IMR-90 (cell line): ENCODE measurements at regions of chr3 and their contacts with region 1.

Region 1: GRCh38 chr3:128095222-128095703 is 28.3 kb downstream of the RUVBL1 start:
- DNase-seq: peak; percentile 83
- ATAC-seq: peak; percentile 99
- H3K4me3 ChIP-seq: no peak overlapping the region
- H3K27ac ChIP-seq: no peak overlapping the region; the same call in 1 of the 2 replicates
- H3K4me1 ChIP-seq: peaks cover 5% of the 10 kb centered on the region
- H3K27me3 ChIP-seq: no peaks in the 10 kb centered on the region
- CTCF ChIP-seq: peak; percentile 92
- POLR2A ChIP-seq: no peak
- RAD21 ChIP-seq: peak; percentile 93

Region 2: DNA sequence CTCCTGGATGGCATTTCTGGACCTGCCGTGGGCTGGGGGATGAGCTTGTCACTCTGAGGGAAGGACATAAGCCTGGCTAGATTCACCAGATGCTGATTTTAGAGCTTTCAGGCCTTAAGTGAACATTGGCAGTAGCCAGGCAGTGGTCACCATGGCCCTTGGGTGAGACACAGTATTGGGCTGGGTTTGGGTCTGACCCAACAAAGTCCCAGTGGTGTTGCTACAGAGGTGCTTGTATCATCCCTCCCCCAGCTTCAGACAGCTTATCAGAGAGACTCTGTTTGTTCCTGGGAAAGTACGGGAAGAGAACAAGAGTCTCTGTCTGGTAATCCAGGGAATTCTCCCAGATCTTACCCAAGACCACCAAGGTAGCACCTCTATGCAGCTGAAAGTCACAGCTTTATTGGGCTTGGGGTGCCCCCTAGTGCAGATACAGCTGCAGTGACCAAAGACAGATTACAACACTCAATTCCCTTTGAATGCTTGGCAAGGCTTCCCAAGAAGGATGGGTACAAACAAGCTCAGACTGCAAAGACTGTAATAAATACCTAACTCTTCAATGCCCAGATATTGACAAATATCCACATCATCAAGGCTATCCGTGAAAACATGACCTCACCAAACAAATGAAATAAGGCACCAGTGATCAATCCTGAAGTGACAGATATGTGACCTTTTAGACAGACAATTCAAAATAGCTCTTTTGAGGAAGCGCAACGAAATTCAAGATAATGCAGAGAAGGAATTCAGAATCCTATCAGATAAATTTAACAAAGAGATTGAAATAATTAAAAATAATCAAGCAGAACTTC is 38.2 kb after region 1 on chr3:
- CTCF ChIA-PET with region 1: interaction called, 26 read pairs
- POLR2A ChIA-PET with region 1: no interaction called
- dilution Hi-C with region 1: no loop called
- in situ Hi-C with region 1: loop called (anchors 5 kb)
- intact Hi-C with region 1: loop called (anchors 1 kb)
- DNase-seq: peak; percentile 70
- ATAC-seq: peak; percentile 87
- H3K4me3 ChIP-seq: no peak overlapping the region
- H3K27ac ChIP-seq: no peak overlapping the region
- H3K4me1 ChIP-seq: no peaks in the 10 kb centered on the region
- H3K27me3 ChIP-seq: peaks cover 3% of the 10 kb centered on the region; the same call in 1 of the 2 replicates
- CTCF ChIP-seq: peak; percentile 81
- POLR2A ChIP-seq: no peak
- RAD21 ChIP-seq: peak; percentile 87

Region 3: DNA sequence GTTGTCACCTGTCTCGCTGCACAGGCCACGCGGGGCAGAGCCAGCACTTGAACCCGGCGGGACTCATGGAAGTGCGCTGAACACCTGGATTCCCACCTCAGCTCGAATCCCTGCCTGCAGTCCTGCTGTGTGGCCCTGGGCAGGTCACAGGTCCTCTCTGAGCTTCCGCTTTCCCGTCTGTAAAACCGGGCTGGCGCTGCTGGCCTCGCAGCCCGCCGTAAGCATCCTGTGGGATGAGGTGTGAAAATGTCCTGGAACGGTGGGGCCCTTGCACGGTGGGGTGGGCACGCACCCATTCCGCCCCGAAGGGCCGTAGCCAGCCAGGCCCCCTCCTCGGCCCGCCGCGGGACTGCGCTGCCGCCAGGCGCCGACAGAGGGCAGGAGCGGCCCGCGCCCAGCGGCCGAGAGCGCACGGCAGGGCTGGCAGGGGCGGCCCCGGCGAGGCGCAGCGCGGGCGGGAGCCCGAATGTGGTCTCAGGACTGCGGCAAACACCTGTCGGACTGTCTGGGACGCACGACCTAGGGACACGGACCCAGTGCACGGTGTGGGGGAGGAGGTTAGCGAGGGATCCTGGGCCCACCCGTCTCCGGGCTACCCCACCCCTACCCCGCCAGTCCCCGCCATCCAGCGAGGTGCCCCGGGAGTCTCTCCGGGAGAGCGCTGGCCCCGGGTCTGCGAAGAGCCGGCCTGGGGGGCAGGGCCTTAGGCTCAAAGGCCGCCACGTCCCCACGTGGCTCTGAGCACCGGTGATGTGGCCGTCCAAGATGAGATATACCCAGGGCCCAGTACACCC is 331.1 kb after region 1 on chr3:
- CTCF ChIA-PET with region 1: no interaction called
- POLR2A ChIA-PET with region 1: no interaction called
- dilution Hi-C with region 1: no loop called
- in situ Hi-C with region 1: no loop called
- intact Hi-C with region 1: loop called (anchors 1 kb)
- DNase-seq: no peak
- ATAC-seq: peak; percentile 98
- H3K4me3 ChIP-seq: no peak overlapping the region
- H3K27ac ChIP-seq: no peak overlapping the region
- H3K4me1 ChIP-seq: no peaks in the 10 kb centered on the region; the same call in 1 of the 2 replicates
- H3K27me3 ChIP-seq: peaks cover 22% of the 10 kb centered on the region
- CTCF ChIP-seq: peak; percentile 94
- POLR2A ChIP-seq: no peak
- RAD21 ChIP-seq: peak; percentile 94

Region 4: DNA sequence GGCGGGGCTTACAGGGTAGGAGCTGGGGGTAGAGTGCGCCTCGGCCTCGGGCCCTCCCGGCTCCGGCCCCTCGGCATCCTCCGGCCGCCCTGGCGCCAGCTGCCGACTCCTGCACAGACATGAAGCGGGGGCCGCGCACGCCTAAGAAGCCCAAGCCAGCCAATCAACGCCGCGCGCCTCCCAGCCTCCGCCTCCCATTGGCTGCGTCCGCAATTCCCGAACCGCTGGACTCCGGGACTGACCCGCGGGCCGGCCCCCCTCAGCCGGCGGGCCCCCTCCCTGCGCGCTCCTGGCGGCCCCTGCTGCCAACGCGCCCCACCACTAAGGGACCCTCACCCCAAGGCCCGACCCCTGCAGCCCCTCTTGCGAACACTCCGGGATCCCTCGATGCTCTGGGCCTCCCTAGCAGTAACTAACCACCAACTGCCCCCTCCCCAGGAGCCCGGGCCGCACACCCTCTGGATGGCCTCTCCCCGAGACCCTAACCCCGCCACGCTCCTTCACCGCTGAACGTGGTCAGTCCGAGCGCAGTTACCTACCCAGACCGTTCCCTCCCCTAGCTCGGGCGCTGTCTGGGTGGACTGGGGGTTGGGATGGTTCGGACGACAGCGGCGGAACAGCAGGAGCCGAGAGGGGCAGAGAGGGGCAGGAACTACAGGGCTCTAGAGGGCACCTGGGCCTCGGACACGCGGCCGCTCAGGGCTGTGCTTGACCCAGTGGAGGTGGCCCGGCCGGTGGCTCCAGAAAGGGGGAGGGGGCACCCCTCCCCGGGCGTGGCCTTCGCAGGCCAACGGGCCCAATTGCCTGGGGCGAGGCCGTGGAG is 392.8 kb after region 1 on chr3:
- CTCF ChIA-PET with region 1: no interaction called
- POLR2A ChIA-PET with region 1: no interaction called
- dilution Hi-C with region 1: no loop called
- in situ Hi-C with region 1: loop called (anchors 10 kb)
- intact Hi-C with region 1: no loop called
- DNase-seq: peak; percentile 87
- ATAC-seq: peak; percentile 83
- H3K4me3 ChIP-seq: peak overlapping the region; percentile 89
- H3K27ac ChIP-seq: peak overlapping the region; percentile 81
- H3K4me1 ChIP-seq: peaks cover 21% of the 10 kb centered on the region
- H3K27me3 ChIP-seq: peaks cover 30% of the 10 kb centered on the region; the same call in 1 of the 2 replicates
- CTCF ChIP-seq: no peak
- POLR2A ChIP-seq: peak; percentile 85
- RAD21 ChIP-seq: no peak

Region 5: GRCh38 chr3:128497387-128498126 is 402.3 kb after region 1 on chr3:
- CTCF ChIA-PET with region 1: no interaction called
- POLR2A ChIA-PET with region 1: no interaction called
- dilution Hi-C with region 1: no loop called
- in situ Hi-C with region 1: no loop called
- intact Hi-C with region 1: loop called (anchors 1 kb)
- DNase-seq: no peak
- ATAC-seq: peak; percentile 69
- H3K4me3 ChIP-seq: peak overlapping the region; percentile 57
- H3K27ac ChIP-seq: no peak overlapping the region
- H3K4me1 ChIP-seq: peaks cover 5% of the 10 kb centered on the region
- H3K27me3 ChIP-seq: peaks cover 34% of the 10 kb centered on the region
- CTCF ChIP-seq: peak; percentile 54
- POLR2A ChIP-seq: no peak
- RAD21 ChIP-seq: peak; percentile 57

Region 6: DNA sequence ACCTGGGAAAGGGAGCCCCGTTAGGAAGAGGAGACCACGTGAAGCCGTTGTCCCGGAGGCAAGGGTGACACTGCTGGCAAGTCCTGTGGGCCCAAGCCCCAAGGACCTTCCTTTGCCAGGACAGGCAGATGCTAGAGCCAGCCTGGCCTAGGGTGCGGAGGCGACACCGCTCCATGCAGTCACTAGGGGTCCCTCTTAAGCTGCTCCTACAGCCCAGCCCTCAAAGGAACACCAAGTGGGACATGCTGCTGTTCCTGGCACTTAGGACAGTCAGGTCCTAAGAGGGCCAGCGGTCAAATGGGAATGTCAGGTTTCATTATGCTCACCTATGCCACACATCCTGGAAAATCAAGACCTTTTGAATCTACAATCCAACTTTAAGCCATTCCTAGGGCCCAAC is 495.7 kb after region 1 on chr3:
- CTCF ChIA-PET with region 1: no interaction called
- POLR2A ChIA-PET with region 1: no interaction called
- dilution Hi-C with region 1: no loop called
- in situ Hi-C with region 1: loop called (anchors 5 kb)
- intact Hi-C with region 1: no loop called
- DNase-seq: no peak
- ATAC-seq: no peak
- H3K4me3 ChIP-seq: no peak overlapping the region
- H3K27ac ChIP-seq: no peak overlapping the region
- H3K4me1 ChIP-seq: no peaks in the 10 kb centered on the region
- H3K27me3 ChIP-seq: peaks cover 3% of the 10 kb centered on the region
- CTCF ChIP-seq: 0 out of 2 replicates have a peak, but pooled peaks have one; percentile 2
- POLR2A ChIP-seq: no peak
- RAD21 ChIP-seq: no peak

Region 7: DNA sequence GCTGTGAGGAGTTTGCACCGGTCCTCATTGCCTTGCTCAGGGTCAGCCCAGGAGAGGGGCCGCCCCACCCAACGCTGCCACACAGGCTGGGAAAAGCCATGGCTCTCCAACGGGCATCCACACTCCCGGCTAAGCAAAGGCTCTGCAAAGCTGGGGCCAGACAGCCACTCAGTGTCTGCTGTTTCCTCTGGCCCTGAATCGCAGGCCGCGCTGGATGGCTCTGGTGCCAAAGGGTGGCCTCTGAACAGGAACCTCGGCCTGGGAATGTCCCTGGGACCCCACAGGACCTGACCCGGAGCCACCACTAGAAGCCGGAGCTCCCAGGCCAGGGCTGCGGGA is 512.4 kb after region 1 on chr3:
- CTCF ChIA-PET with region 1: no interaction called
- POLR2A ChIA-PET with region 1: no interaction called
- dilution Hi-C with region 1: no loop called
- in situ Hi-C with region 1: no loop called
- intact Hi-C with region 1: loop called (anchors 1 kb)
- DNase-seq: no peak
- ATAC-seq: no peak
- H3K4me3 ChIP-seq: no peak overlapping the region
- H3K27ac ChIP-seq: no peak overlapping the region
- H3K4me1 ChIP-seq: no peaks in the 10 kb centered on the region
- H3K27me3 ChIP-seq: no peaks in the 10 kb centered on the region
- CTCF ChIP-seq: no peak
- POLR2A ChIP-seq: no peak
- RAD21 ChIP-seq: no peak